Dendritic cell treated with granulocyte-macrophage colony-stimulating factor and Interleukin-4, amounts not matched to agents 40 ng/mL and 50 ng/mL, for 4 days (primary cell): ENCODE measurements at regions of chr12 and their contacts with region 1.

Region 1: DNA sequence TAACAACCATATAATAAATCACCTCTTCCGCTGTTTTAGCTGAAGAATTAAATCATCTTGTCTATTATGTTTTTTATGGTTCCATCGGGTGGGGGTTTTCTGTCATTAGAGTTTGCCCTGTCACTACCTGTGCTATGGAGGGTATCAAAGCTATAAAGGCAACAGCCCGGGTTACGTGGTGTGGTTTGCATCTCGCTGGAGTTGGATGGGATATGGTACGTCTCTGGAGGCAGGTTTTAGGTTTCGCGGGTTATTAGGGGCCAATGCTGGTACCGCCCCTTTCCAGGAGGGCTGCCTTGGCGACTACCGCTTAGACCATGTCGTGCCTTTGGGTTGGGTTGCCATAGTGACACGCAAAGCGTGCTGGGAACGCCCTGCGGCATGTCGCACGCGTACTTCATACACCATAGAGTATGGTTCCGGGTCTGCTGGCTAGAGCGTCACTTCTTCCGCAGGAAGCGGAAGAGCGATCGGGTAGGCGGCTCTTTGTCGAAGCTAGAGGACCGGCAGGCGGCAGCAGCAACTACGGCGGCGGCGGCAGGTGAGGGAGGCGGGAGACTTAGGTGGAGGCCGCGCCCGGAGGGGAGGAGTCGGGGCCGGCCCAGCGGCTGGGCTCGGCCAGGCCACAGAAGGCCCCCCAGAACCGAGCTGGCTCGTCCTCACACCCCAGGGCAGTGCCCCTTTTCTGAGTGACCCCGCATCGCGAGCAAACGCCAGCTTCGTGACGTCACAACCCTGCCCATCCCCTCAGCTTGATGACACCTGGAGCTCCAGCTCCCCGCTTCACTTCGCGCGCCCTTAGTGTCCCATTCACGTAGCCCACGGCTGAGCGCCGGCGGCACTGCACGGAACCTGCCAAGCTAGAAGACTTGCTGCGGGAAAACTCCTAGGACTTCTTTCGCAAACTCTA is at the start of gene ZC3H10:
- H3K4me3 Mint-ChIP-seq: peak within 1 kb of the TSS; percentile 94
- H3K27ac Mint-ChIP-seq: peak within 1 kb of the TSS; percentile 99
- H3K4me1 Mint-ChIP-seq: peaks cover 52% of the 10 kb centered on the region
- H3K27me3 Mint-ChIP-seq: no peaks in the 10 kb centered on the region

Region 2: GRCh38 chr12:55847603-55848291 is 270.3 kb before region 1 on chr12:
- intact Hi-C with region 1: loop called (anchors 2 kb)
- H3K4me3 Mint-ChIP-seq: peak overlapping the region; percentile 32
- H3K27ac Mint-ChIP-seq: peak overlapping the region; percentile 99
- H3K4me1 Mint-ChIP-seq: peaks cover 73% of the 10 kb centered on the region
- H3K27me3 Mint-ChIP-seq: no peaks in the 10 kb centered on the region

Region 3: GRCh38 chr12:56104109-56104814 is 13.8 kb before region 1 on chr12 and contains the start of gene PA2G4:
- intact Hi-C with region 1: loop called (anchors 1 kb)
- H3K4me3 Mint-ChIP-seq: peak within 1 kb of the TSS; percentile 98
- H3K27ac Mint-ChIP-seq: peak within 1 kb of the TSS; percentile 91
- H3K4me1 Mint-ChIP-seq: peaks cover 21% of the 10 kb centered on the region
- H3K27me3 Mint-ChIP-seq: no peaks in the 10 kb centered on the region

Region 4: DNA sequence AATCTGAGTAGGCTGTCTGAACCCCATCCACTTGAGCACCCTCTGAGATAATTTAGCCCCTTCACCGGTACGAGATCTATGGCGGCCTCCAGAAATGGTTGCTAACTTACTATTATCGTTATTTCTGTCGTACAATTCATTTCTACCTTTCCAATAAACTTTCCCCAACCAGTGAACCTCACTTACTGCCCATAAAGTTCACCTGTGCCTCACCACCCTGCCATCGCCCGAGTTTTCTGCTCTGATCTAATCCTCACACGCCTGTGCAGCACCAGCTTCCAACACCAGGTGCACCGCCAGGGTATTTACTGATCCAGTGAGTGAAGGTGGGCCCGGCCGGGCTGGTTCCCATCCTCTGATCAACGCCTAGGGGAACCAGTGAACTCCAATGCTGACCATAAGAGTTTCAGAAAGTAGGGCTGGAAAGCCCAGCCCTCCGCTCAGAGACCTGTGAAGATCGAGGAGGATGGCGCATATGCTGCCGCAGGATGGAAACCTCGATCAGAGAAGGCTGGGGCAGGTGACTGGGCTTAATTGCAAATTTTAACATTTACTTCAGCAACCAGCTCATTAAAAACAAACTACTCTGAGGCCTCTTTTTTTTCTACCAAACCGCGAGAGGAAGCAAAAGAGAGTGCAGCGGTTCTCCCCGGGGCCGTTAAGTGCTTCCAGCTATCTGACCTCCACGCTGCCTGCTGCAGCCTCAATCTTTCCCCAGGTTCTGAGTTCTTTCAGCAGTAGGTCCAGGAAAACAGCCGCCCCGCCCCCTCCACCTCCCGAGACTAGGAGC is 33.7 kb after region 1 on chr12:
- intact Hi-C with region 1: no loop called
- H3K4me3 Mint-ChIP-seq: peak overlapping the region; percentile 88
- H3K27ac Mint-ChIP-seq: peak overlapping the region; percentile 94
- H3K4me1 Mint-ChIP-seq: peaks cover 51% of the 10 kb centered on the region
- H3K27me3 Mint-ChIP-seq: no peaks in the 10 kb centered on the region

Region 5: GRCh38 chr12:56189176-56189917 is 71.3 kb after region 1 on chr12 and contains the start of gene SMARCC2:
- intact Hi-C with region 1: loop called (anchors 1 kb)
- H3K4me3 Mint-ChIP-seq: peak within 1 kb of the TSS; percentile 95
- H3K27ac Mint-ChIP-seq: peak within 1 kb of the TSS; percentile 97
- H3K4me1 Mint-ChIP-seq: peaks cover 43% of the 10 kb centered on the region
- H3K27me3 Mint-ChIP-seq: no peaks in the 10 kb centered on the region

Region 6: GRCh38 chr12:56546680-56547079 is 428.6 kb after region 1 on chr12:
- intact Hi-C with region 1: no loop called
- H3K4me3 Mint-ChIP-seq: no peak overlapping the region
- H3K27ac Mint-ChIP-seq: no peak overlapping the region
- H3K4me1 Mint-ChIP-seq: no peaks in the 10 kb centered on the region
- H3K27me3 Mint-ChIP-seq: no peaks in the 10 kb centered on the region